Activated naive CD4-positive, alpha-beta T cell treated with anti-CD3 and anti-CD28 coated beads for 36 hours (primary cell): ENCODE measurements at regions of chr16 and their contacts with region 1.

Region 1: GRCh38 chr16:74296432-74297144 is at the start of gene PSMD7:
- DNase-seq: peak; percentile 93
- H3K4me3 Mint-ChIP-seq: peak within 1 kb of the TSS; percentile 92
- H3K27ac Mint-ChIP-seq: peak within 1 kb of the TSS; percentile 93
- H3K4me1 Mint-ChIP-seq: peaks cover 32% of the 10 kb centered on the region
- H3K27me3 Mint-ChIP-seq: no peaks in the 10 kb centered on the region
- total RNA-seq, gene PSMD7: 113 to 114 TPM

Region 2: GRCh38 chr16:74275716-74276115 is 20.9 kb before region 1 on chr16:
- CTCF ChIA-PET with region 1: no interaction called
- intact Hi-C with region 1: no loop called
- DNase-seq: no peak
- H3K4me3 Mint-ChIP-seq: no peak overlapping the region
- H3K27ac Mint-ChIP-seq: no peak overlapping the region
- H3K4me1 Mint-ChIP-seq: no peaks in the 10 kb centered on the region
- H3K27me3 Mint-ChIP-seq: peaks cover 5% of the 10 kb centered on the region

Region 3: GRCh38 chr16:74309789-74310781 is 13.5 kb after region 1 on chr16:
- CTCF ChIA-PET with region 1: interaction called, 20 read pairs
- intact Hi-C with region 1: no loop called
- DNase-seq: peak; percentile 44
- H3K4me3 Mint-ChIP-seq: no peak overlapping the region
- H3K27ac Mint-ChIP-seq: no peak overlapping the region
- H3K4me1 Mint-ChIP-seq: no peaks in the 10 kb centered on the region
- H3K27me3 Mint-ChIP-seq: no peaks in the 10 kb centered on the region

Region 4: DNA sequence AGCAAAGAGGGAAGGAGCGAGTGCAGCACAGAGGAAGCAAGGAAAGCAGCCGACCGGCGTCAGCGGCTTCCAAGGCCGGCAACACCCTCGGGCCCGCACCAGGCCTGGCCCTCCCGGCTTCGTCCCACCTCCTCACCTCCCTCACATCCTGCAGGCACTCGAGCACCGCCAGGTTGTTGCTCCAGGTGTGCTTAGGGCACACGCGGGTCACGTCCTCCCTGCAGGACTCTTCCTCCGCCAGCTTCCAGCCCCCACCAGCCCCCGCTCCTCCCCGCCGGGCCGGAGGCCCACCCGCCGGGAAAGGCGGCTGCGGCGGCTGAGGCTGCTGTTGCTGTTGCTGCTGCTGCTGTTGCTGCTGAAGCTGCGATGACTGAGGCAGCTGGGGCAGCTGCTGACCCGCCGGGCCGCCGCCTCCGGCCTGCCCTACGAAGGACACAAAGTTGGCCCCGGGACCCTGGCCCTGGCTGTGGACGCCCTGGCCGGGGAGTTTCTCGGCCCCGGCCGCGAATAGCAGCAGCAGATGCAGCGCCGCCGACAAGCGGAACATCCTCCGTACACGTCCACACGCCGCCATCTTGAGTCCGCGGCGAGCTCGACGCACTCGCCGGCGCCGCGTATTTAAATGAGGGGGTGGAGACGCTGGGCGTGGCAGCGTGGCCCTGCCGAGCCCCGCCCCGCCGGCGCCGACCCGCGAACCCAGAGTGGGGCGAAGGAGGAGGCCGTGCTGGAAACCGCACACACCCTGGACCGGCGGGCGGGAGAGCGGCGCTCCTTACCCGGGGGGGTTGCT is 310.1 kb after region 1 on chr16 and contains the start of gene GLG1:
- CTCF ChIA-PET with region 1: no interaction called
- intact Hi-C with region 1: loop called (anchors 1 kb)
- DNase-seq: peak; percentile 92
- H3K4me3 Mint-ChIP-seq: peak within 1 kb of the TSS; percentile 99
- H3K27ac Mint-ChIP-seq: peak within 1 kb of the TSS; percentile 86
- H3K4me1 Mint-ChIP-seq: peaks cover 53% of the 10 kb centered on the region
- H3K27me3 Mint-ChIP-seq: no peaks in the 10 kb centered on the region
- total RNA-seq, gene GLG1: 60.8 to 62.0 TPM

Region 5: DNA sequence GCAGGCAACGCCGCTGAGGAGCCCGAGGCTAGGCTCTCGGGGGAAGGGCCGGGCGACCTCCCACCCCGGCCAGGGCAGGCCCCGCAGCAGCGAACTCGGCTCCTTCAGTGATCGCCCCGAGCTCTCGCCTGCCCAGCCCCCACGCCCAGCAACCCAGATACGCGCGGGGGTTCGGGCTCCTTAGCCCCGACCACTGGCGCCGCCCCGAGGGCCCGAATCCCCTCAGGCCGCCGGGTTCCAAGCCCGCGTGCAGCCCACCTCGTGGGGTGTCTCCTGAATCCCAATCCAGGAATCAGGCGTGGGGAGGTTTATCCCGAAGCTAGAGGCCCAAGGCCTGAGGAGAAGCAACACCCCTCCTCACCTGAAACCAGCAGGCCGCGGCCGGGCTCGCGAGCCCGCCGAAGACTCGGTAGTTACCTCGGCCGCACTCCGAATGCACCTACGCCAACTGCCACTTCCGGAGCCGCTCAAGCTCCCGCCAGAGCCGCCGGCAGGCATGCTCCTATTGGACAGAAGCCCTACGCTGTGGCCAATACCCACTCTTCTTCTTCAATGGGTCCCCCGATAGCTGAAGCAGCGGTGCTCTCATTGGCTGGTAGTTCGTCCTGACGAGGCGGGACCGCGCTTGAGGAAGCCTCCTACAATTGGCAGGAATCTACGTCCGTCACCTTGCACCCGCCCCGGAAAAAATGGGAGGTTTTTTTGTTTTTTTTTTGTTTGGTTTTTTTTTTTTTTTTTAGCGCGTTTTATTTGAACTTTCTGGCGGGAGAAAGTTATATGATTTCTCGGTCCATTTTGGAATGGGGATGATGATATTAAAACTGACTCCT is 370.1 kb after region 1 on chr16 and contains the start of gene RFWD3:
- CTCF ChIA-PET with region 1: no interaction called
- intact Hi-C with region 1: loop called (anchors 1 kb)
- DNase-seq: peak; percentile 98
- H3K4me3 Mint-ChIP-seq: peak within 1 kb of the TSS; percentile 89
- H3K27ac Mint-ChIP-seq: peak within 1 kb of the TSS; percentile 88
- H3K4me1 Mint-ChIP-seq: peaks cover 39% of the 10 kb centered on the region
- H3K27me3 Mint-ChIP-seq: no peaks in the 10 kb centered on the region
- total RNA-seq, gene RFWD3: 114 to 124 TPM

Region 6: DNA sequence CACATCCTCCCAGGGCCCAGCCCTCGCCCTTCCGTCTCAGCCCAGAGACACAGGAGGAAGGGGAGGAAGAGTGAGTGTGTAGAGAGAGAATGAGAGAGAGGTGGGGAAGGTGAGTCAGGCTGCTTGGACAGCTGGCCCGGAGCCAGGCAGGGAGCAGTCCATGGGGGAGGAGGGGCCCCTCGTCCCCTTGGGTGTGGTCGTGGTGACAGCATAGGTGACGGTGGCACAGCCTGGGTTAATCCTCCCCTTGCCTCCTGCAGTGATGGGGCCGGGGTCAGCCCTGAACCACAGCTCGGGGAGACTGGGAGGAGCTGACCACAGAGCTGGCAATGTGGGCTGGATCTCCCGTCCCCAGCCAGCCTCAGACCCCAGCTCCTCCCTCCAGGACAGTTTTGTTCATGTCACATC is 441.6 kb after region 1 on chr16:
- CTCF ChIA-PET with region 1: no interaction called
- intact Hi-C with region 1: no loop called
- DNase-seq: no peak
- H3K4me3 Mint-ChIP-seq: no peak overlapping the region
- H3K27ac Mint-ChIP-seq: no peak overlapping the region
- H3K4me1 Mint-ChIP-seq: no peaks in the 10 kb centered on the region
- H3K27me3 Mint-ChIP-seq: peaks cover 2% of the 10 kb centered on the region

Region 7: DNA sequence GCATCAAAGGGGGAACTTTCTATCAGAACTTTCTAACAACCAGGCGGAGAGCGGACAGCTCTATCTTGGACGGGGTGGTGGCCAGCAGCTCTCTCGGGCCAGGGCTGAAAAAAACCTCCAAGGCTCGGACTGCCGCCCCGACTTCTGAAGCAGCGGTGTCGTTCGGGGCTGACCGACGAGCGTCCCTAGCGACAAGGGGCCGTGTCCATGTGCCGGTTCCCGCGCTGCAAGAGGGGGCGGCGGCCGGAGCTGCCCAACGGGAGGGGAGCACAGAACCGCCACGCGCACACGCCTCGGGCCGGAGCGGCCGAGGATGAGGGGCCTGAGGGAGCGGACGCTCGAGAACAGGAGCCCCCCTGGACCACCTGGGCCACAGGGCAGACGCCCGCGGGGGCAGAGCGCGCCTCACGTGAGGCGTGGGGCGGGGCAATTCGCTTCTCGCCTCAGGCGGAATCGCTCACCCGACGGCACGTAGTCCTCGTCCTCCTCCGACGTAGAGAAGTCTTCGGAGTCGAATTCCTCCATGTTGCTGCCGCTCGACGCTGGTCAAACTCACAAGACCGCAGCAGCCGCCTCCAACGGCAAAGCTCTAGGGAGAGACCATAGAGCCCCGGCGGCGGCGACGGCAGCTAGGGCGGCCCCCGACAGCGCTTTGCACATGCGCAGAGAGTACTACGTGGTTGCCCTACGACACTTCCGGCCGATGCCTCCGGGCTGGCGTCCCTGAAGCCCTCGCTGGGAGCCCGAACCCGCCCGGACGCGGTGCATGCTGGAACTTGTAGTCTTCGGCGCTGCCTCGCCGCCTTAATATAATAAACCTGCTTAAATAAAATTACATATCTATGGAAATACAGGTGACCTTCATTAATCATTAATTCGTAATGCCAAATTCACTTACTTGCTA is 1136.5 kb after region 1 on chr16 and contains the start of gene CFDP1:
- CTCF ChIA-PET with region 1: no interaction called
- intact Hi-C with region 1: loop called (anchors 10 kb)
- DNase-seq: peak; percentile 96
- H3K4me3 Mint-ChIP-seq: peak within 1 kb of the TSS; percentile 81
- H3K27ac Mint-ChIP-seq: peak within 1 kb of the TSS; percentile 93
- H3K4me1 Mint-ChIP-seq: peaks cover 30% of the 10 kb centered on the region
- H3K27me3 Mint-ChIP-seq: no peaks in the 10 kb centered on the region
- total RNA-seq, gene CFDP1: 37.2 to 44.1 TPM